Activated T-helper 1 cell treated with anti-CD3 and anti-CD28 coated beads, Interleukin-12 subunit alpha, Interleukin-12 subunit beta, Interleukin-2, Interleukin-4 antibody, amounts not matched to agents 30 ng/mL and 10 ng/mL and 1 ng/mL, durations not matched to agents 14 hours and 24 hours and 36 hours (primary cell): ENCODE measurements at regions of chr19 and their contacts with region 1.

Region 1: DNA sequence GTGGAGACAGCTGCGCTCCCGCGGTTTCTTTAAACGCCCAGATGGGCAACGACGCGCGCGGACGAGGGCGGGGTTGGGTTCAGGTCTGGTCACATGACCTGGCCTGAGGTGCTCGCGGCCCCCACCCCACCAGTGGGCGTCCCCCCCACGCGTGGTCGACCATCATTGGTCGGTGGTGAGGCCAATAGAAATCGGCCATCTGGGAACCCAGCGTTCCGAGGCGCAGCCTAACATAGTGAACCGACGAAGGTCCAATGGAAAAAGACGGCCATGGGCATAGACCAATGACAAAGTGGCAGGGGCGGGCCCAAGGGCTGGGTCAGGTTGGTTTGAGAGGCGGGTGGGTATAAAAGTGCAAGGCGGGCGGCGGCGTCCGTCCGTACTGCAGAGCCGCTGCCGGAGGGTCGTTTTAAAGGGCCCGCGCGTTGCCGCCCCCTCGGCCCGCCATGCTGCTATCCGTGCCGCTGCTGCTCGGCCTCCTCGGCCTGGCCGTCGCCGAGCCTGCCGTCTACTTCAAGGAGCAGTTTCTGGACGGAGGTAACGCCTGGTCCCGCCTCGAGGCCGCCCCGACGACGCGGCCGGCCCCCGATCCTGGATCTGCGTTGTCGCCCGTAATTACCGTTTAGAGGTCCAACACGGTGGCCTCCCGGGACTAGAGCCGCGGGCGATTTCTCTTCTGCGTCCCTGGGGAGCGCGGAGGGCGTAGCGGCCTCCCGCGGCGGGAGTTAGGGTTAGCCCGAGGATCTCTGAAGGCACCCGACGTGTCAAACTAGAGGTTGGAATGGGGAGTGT is at the start of gene CALR:
- DNase-seq: peak; percentile 100
- H3K4me3 Mint-ChIP-seq: peak within 1 kb of the TSS; percentile 100
- H3K27ac Mint-ChIP-seq: peak within 1 kb of the TSS; percentile 94
- H3K4me1 Mint-ChIP-seq: peaks cover 51% of the 10 kb centered on the region
- H3K27me3 Mint-ChIP-seq: no peaks in the 10 kb centered on the region
- total RNA-seq, gene CALR: 913 and 933 TPM in 2 replicates

Region 2: DNA sequence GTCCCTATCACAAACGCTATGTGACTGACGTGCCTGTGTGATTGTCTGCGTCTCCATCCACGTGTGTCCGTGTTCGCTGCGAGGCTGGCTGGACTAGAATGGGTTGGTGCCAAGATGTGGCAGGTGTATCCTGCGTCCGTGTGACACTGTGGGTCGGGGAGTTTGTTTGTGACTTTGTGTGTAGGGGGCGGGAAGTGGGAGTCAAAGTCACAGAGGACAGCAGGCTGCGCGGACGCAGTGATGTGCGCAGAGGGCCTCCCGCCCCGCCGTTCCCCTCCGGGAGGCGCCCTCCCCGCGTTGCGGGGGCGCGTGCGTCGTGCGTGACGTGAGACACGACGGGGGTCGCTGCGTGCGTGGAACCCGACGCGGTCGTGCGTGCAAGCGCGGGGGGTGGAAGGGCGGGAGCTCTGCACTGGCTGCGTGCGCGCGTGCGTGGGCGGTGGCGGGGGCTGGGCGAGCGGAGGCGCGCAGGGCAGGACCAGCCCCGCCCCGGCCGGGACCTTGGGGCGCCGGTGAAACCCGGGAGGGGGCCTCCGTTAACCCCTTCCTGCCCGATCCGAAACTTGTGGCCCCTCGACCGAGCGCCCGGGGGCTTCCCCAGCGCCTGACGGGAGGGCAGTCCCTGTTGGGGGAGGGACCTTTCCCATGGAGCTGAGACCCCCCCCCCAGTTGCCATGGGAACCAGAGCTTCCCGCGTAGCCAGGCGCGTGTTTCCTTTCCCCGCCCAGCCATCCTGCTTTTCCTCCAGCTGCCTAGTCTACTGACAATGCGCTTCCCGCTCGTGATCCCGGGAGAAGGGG is 156.0 kb before region 1 on chr19:
- intact Hi-C with region 1: loop called (anchors 2 kb)
- DNase-seq: peak; percentile 87
- H3K4me3 Mint-ChIP-seq: peak overlapping the region; percentile 86
- H3K27ac Mint-ChIP-seq: peak overlapping the region; percentile 99
- H3K4me1 Mint-ChIP-seq: peaks cover 39% of the 10 kb centered on the region
- H3K27me3 Mint-ChIP-seq: no peaks in the 10 kb centered on the region

Region 3: DNA sequence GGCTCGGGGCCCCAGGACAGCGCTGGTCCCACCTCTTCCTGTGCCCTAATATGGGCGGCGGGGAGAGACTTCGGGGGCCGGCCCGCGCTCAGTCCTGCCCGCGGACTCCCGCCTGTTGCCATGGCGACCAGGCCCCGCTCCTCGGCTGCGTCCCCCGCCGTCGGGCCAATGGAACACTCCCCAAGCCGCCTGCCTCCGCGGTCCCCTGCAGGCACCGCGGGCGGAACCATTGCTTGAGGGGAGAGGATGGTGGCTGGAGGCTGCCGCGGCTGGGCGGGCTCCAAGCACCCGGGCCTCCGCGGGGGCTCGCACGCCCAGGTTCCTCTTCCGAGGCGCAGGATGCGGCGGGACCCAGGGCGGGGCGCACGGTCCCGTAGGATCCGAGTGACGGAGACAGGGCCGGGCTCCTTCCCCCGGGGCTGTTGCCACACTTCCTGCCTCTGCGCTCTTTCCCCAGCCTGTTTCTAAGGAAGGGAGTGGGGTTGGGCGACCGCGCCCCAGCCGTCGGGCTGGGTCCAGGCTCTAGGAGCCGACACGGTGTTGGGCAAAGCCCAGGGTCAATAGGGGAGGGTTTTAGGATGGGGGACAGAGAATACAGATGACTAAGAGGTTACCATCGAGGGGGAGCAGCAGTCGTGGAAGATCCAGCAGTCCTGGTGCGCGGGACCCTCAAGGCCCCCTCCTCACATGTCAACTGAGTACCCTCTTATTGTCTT is 148.4 kb before region 1 on chr19:
- intact Hi-C with region 1: loop called (anchors 2 kb)
- DNase-seq: peak; percentile 94
- H3K4me3 Mint-ChIP-seq: peak overlapping the region; percentile 97
- H3K27ac Mint-ChIP-seq: peak overlapping the region; percentile 91
- H3K4me1 Mint-ChIP-seq: peaks cover 30% of the 10 kb centered on the region
- H3K27me3 Mint-ChIP-seq: no peaks in the 10 kb centered on the region

Region 4: GRCh38 chr19:12890787-12891552 is 47.5 kb before region 1 on chr19 and contains the start of gene GCDH:
- intact Hi-C with region 1: loop called (anchors 1 kb)
- DNase-seq: peak; percentile 95
- H3K4me3 Mint-ChIP-seq: peak within 1 kb of the TSS; percentile 97
- H3K27ac Mint-ChIP-seq: peak within 1 kb of the TSS; percentile 88
- H3K4me1 Mint-ChIP-seq: peaks cover 13% of the 10 kb centered on the region
- H3K27me3 Mint-ChIP-seq: no peaks in the 10 kb centered on the region
- total RNA-seq, gene GCDH: 65.9 and 68.8 TPM in 2 replicates